ENCODE measurements at regions of chr17 and their contacts with region 1.

Region 1: DNA sequence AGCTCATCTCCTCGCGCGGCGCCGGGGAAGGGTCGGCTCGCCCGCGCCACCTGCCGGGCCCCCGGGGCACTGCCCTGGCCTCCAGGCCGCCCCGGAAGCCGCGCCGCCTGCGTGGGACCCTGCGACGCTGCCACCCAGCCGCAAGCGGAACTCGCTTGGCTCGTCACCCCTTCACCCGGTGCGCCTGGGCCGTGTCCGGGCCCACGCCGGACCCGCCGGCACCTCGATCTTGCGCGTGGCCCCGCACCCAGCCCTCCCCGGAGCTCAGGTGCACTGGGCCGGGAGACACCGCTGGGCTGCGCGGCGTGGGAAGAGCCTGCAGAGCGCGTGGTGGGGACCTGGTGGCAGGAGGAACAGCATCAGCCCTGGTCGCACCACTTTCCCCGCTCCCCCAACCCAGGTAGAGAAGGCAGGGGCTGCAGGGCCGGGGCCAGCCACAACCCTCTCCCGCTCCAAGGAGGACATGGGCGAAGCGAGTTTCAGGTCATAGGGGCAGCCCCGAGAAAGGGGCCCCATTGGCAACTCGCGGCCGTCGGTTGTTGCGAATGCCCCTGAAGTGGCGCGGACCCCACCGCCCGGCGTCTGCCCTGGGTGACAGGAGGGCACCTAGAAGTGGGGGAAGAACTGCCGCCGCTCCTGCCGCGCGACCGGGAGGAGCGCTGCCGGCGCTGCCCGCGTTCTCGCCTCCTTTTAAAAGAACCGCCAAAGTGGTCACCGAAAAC is 363 bp upstream of the MIF4GD start:
- DNase-seq: peak; percentile 80 to 91
- ATAC-seq: peak; percentile 61 to 63
- H3K4me3 ChIP-seq: peak overlapping the region; percentile 93
- H3K27ac ChIP-seq: peak overlapping the region; percentile 95 to 96
- H3K4me1 ChIP-seq: peaks cover 26% of the 10 kb centered on the region
- CTCF ChIP-seq: peak; percentile 92
- EP300 ChIP-seq: no peak
- POLR2A ChIP-seq: peak; percentile 78
- RAD21 ChIP-seq: peak; percentile 16 to 49; a peak in 3 of 5 replicates

Region 2: GRCh38 chr17:75096082-75096625 is 175.2 kb before region 1 on chr17:
- CTCF ChIA-PET with region 1: no interaction called
- POLR2A ChIA-PET with region 1: no interaction called
- DNase-seq: peak; percentile 90 to 99
- ATAC-seq: peak; percentile 85 to 87
- H3K4me3 ChIP-seq: no peak overlapping the region
- H3K27ac ChIP-seq: peak overlapping the region; percentile 71 to 96
- H3K4me1 ChIP-seq: peaks cover 60% of the 10 kb centered on the region
- CTCF ChIP-seq: no peak
- EP300 ChIP-seq: peak in 1 of 2 experiments; percentile 79; a peak in 2 of 5 replicates
- POLR2A ChIP-seq: no peak
- RAD21 ChIP-seq: peak; percentile 28 to 40; a peak in 3 of 5 replicates

Region 3: DNA sequence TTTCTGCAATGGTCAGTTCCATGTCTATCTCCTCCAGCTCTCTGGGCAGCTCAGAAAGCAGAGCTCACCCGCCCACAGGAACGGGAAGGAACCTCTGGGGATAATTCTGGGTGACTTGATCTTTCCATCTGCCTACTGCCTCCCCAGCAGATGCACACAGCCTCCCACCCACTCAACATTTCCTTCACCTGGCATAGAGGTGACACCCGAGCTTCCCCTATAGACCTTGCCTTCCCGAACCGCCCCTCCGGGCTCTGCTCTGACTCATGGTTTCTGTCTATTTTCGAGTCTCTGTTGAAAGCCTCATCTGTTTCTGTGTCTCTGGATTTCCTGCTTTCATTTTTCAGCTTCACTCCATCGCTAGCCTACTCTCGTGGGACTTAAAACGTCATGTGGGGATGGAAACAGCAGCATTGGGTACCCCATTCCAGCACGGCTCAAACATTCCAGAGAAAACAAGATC is 21.4 kb before region 1 on chr17:
- CTCF ChIA-PET with region 1: interaction called, 10 read pairs
- POLR2A ChIA-PET with region 1: no interaction called
- DNase-seq: no peak
- ATAC-seq: no peak; a peak in 1 of 6 replicates
- H3K4me3 ChIP-seq: no peak overlapping the region
- H3K27ac ChIP-seq: no peak overlapping the region
- H3K4me1 ChIP-seq: no peaks in the 10 kb centered on the region
- CTCF ChIP-seq: no peak
- EP300 ChIP-seq: no peak
- POLR2A ChIP-seq: no peak
- RAD21 ChIP-seq: no peak

Region 4: GRCh38 chr17:75295201-75296158 is 24.1 kb after region 1 on chr17:
- CTCF ChIA-PET with region 1: interaction called, 27 read pairs
- POLR2A ChIA-PET with region 1: interaction called, 4 read pairs
- DNase-seq: no peak
- ATAC-seq: no peak
- H3K4me3 ChIP-seq: no peak overlapping the region
- H3K27ac ChIP-seq: no peak overlapping the region
- H3K4me1 ChIP-seq: peaks cover 1% of the 10 kb centered on the region; the same call in 1 of the 3 replicates
- CTCF ChIP-seq: no peak
- EP300 ChIP-seq: no peak
- POLR2A ChIP-seq: no peak
- RAD21 ChIP-seq: no peak

Region 5: DNA sequence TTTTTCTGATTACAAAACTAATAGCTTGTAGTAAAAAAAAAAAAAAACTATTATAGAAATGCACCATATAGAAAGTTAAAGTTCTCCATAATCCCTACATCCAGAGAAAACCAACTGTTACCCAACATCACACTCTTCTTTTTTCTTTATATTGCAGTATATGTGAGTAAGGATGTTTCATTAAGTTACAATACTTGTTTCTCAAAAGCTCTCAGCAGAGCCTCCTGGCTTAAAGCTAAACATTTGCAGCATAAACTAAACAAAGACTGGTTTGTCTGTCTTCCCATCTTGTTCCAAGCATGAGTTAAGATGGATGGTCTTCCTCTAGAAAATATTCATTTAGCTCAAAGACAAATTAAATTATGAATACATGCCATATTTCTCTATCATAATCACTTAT is 108.9 kb after region 1 on chr17:
- CTCF ChIA-PET with region 1: interaction called, 14 read pairs
- POLR2A ChIA-PET with region 1: no interaction called
- DNase-seq: no peak
- ATAC-seq: no peak
- H3K4me3 ChIP-seq: no peak overlapping the region
- H3K27ac ChIP-seq: no peak overlapping the region
- H3K4me1 ChIP-seq: peaks cover 24% of the 10 kb centered on the region
- CTCF ChIP-seq: no peak
- EP300 ChIP-seq: no peak
- POLR2A ChIP-seq: no peak
- RAD21 ChIP-seq: no peak

Region 6: DNA sequence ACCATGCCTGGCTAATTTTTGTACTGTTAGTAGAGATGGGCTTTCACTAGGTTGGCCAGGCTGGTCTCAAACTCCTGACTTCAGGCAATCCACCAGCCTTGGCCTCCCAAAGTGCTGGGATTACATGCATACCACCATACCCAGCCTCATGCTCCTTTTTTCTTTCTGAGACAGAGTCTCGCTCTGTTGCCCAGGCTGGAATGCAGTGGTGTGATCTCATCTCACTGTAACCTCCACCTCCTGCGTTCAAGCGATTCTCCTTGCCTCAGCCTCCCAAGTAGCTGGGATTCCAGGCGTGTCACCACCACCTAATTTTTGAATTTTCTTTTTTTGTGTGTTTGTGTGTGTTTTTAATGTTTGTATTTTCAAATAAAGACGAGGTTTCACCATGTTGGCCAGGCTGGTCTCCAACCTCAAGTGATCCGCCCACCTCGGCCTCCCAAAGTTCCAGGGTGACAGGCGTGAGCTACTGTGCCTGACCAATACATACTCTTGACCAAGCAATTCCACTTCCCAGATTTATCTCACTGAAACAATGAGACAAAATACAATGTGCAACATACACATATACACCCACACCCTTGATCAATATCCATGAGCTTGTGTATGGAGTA is 129.0 kb after region 1 on chr17:
- CTCF ChIA-PET with region 1: interaction called, 15 read pairs
- POLR2A ChIA-PET with region 1: interaction called, 14 read pairs
- DNase-seq: no peak
- ATAC-seq: no peak
- H3K4me3 ChIP-seq: no peak overlapping the region
- H3K27ac ChIP-seq: no peak overlapping the region
- H3K4me1 ChIP-seq: peaks cover 16% of the 10 kb centered on the region
- CTCF ChIP-seq: no peak
- EP300 ChIP-seq: no peak
- POLR2A ChIP-seq: no peak
- RAD21 ChIP-seq: no peak

Region 7: DNA sequence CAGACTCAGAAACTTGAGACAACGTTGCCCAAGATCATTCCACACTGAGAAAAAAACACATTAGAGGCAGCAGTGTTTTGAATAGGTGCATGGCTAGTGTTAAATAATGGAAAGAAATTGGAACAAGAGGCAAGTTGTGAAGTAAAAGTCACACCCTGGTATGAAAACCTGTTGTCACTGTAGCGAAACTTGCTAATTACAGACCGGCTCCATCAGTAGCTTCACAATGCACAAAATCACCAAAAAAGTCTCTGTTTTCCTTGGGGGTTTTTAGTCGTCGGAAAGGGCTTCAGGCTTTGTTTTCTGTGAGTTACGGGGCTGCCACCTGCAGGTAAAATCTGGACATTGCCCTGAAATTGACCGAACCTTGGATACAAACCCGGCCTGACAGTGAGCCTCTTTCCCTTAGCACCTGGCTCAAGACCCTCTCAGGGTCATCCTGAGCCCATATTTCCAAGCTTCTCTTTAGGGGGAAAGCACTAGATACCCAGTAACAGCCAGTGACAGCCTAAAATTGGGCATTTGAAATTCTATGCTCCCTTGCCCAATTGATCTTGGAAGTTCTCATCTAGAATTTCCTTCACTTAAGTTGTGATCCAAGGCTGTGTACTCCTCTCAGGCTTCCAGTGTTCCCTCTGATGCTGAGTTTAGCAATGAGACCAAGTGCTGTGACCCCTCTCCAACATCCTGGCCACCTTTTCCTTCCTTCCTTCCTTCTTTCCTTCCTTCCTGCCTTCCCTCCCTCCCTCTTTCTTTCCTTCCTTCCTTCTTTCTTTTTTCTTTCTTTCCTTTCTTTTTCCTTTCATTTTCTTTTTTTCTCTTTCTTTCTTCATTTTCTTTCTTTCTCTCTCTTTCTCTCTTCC is 141.3 kb after region 1 on chr17:
- CTCF ChIA-PET with region 1: interaction called, 36 read pairs
- POLR2A ChIA-PET with region 1: no interaction called
- DNase-seq: peak; percentile 75 to 86
- ATAC-seq: peak; percentile 87 to 89
- H3K4me3 ChIP-seq: peak overlapping the region; percentile 7; the same call in 2 of the 3 replicates
- H3K27ac ChIP-seq: peak overlapping the region in 1 of 2 experiments; percentile 35; a peak in 1 of 6 replicates
- H3K4me1 ChIP-seq: no peaks in the 10 kb centered on the region
- CTCF ChIP-seq: peak; percentile 95
- EP300 ChIP-seq: no peak
- POLR2A ChIP-seq: no peak
- RAD21 ChIP-seq: peak; percentile 91 to 95